ENCODE measurements at regions of chr10 and their contacts with region 1.

Region 1: GRCh38 chr10:70815504-70816219 is at the start of gene SGPL1:
- DNase-seq: peak; percentile 74 to 87 (median 83)
- H3K4me3 ChIP-seq: peak within 1 kb of the TSS; percentile 26 to 72
- H3K4me3 Mint-ChIP-seq: peak within 1 kb of the TSS; percentile 87 to 95 (median 92)
- H3K27ac ChIP-seq: peak within 1 kb of the TSS; percentile 44
- H3K27ac Mint-ChIP-seq: peak within 1 kb of the TSS; percentile 87 to 96 (median 91)
- H3K4me1 ChIP-seq: peaks cover 28% of the 10 kb centered on the region
- H3K4me1 Mint-ChIP-seq: peaks cover 23 to 55% (median 39%) of the 10 kb centered on the region in 4 donors
- H3K27me3 ChIP-seq: no peaks in the 10 kb centered on the region
- H3K27me3 Mint-ChIP-seq: no peaks in the 10 kb centered on the region
- total RNA-seq, gene SGPL1: 29.6 to 32.2 TPM

Region 2: GRCh38 chr10:70880077-70880534 is 64.4 kb after region 1 on chr10:
- CTCF ChIA-PET with region 1: interaction called, 19 read pairs
- POLR2A ChIA-PET with region 1: no interaction called
- intact Hi-C with region 1: loop called (anchors 1 kb)
- DNase-seq: peak; percentile 68 to 77 (median 73)
- H3K4me3 ChIP-seq: no peak overlapping the region
- H3K4me3 Mint-ChIP-seq: no peak overlapping the region
- H3K27ac ChIP-seq: no peak overlapping the region
- H3K27ac Mint-ChIP-seq: peak overlapping the region in 1 of 7 donors; percentile 36
- H3K4me1 ChIP-seq: no peaks in the 10 kb centered on the region
- H3K4me1 Mint-ChIP-seq: peaks cover 3 to 6% (median 4%) of the 10 kb centered on the region in 4 donors
- H3K27me3 ChIP-seq: no peaks in the 10 kb centered on the region
- H3K27me3 Mint-ChIP-seq: no peaks in the 10 kb centered on the region

Region 3: DNA sequence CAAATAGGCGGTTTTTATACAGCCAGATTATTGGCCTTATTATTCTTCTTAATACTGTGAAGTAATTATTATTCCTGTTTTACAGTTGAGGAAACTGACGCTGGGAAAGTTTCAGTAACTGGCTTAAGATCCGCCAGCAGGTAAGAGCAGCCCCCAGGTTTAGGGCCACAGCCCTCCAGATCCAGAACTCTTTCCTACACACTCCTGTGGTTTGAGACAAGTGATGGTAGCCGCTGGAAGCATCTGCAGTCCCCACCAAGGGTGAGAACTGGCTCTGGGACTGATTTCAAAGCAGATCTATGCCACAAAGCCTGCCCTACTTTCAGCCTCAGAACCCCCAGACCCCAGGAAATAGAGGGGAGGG is 393.7 kb after region 1 on chr10:
- CTCF ChIA-PET with region 1: no interaction called
- POLR2A ChIA-PET with region 1: no interaction called
- intact Hi-C with region 1: loop called (anchors 10 kb)
- DNase-seq: no peak
- H3K4me3 ChIP-seq: no peak overlapping the region
- H3K4me3 Mint-ChIP-seq: no peak overlapping the region
- H3K27ac ChIP-seq: no peak overlapping the region
- H3K27ac Mint-ChIP-seq: no peak overlapping the region
- H3K4me1 ChIP-seq: no peaks in the 10 kb centered on the region
- H3K4me1 Mint-ChIP-seq: peaks cover 3 to 17% (median 9%) of the 10 kb centered on the region in 4 donors
- H3K27me3 ChIP-seq: peaks cover 19% of the 10 kb centered on the region
- H3K27me3 Mint-ChIP-seq: peaks cover 46 to 59% of the 10 kb centered on the region in 2 donors

Measured in CD4-positive, alpha-beta memory T cell (primary cell).